ENCODE measurements at regions of chr5 and their contacts with region 1.

Region 1: GRCh38 chr5:56783261-56783660 is 32.1 kb upstream of the MAP3K1 start:
- DNase-seq: no peak
- ATAC-seq: no peak
- H3K4me3 Mint-ChIP-seq: no peak overlapping the region
- H3K27ac Mint-ChIP-seq: no peak overlapping the region
- H3K4me1 Mint-ChIP-seq: no peaks in the 10 kb centered on the region
- H3K27me3 Mint-ChIP-seq: no peaks in the 10 kb centered on the region
- CTCF ChIP-seq: no peak

Region 2: DNA sequence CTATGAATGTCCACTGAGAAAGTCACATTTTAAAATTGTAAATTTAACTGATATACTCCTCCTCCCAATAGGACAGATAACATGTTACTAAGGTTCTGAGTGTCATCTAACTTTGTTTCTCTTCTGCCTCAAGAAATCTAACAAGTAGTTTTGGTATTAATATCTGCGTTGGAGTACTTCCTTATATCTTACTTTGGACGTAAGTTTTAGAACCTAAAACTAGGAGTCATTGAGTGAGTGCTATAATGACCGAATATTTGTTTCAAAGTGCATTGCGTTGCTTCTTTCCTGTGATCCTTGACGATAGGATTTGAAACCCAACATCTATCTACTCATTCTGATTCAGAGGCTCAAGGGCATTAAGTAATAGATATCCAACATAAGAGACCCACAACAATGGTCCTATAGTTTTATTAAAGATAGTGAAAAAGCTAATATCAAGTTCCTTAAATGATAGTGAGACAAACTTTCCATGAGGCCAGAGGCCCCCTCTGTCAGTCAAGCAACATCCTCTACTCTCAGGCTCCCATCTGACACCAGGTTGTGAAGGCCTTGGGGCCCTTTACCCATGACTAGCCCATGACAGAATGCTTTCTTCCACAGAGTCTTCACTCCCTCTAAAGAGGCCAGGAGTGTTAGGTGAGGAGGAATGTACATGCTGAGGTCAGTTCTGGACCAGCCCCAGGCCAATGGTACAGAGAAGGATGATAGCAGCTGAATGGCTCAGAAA is 13.2 kb before region 1 on chr5:
- CTCF ChIA-PET with region 1: no interaction called
- POLR2A ChIA-PET with region 1: no interaction called
- intact Hi-C with region 1: loop called (anchors 2 kb)
- DNase-seq: no peak
- ATAC-seq: peak; percentile 58
- H3K4me3 Mint-ChIP-seq: no peak overlapping the region
- H3K27ac Mint-ChIP-seq: peak overlapping the region; percentile 46
- H3K4me1 Mint-ChIP-seq: peaks cover 57% of the 10 kb centered on the region
- H3K27me3 Mint-ChIP-seq: no peaks in the 10 kb centered on the region
- CTCF ChIP-seq: no peak

Measured in activated B cell treated with CpG ODN at 0.5 μM for 24 hours (primary cell).